Tibial artery (tissue), 4 donors: ENCODE measurements at regions of chr12 and their contacts with region 1.

Region 1: GRCh38 chr12:25958428-25959070 is at the start of gene RASSF8:
- DNase-seq: peak; percentile 61 to 85
- H3K4me3 ChIP-seq: peak within 1 kb of the TSS; percentile 92 to 96
- H3K27ac ChIP-seq: peak within 1 kb of the TSS; percentile 92 to 98
- H3K4me1 ChIP-seq: peaks cover 0 to 42% (median 20%) of the 10 kb centered on the region in 4 donors
- H3K27me3 ChIP-seq: no peaks in the 10 kb centered on the region
- CTCF ChIP-seq: no peak

Region 2: GRCh38 chr12:25997201-25997963 is 38.8 kb after region 1 on chr12:
- intact Hi-C with region 1: loop called (anchors 5 kb)
- DNase-seq: no peak
- H3K4me3 ChIP-seq: no peak overlapping the region
- H3K27ac ChIP-seq: no peak overlapping the region
- H3K4me1 ChIP-seq: peaks cover 0 to 60% (median 34%) of the 10 kb centered on the region in 4 donors
- H3K27me3 ChIP-seq: no peaks in the 10 kb centered on the region
- CTCF ChIP-seq: no peak

Region 3: DNA sequence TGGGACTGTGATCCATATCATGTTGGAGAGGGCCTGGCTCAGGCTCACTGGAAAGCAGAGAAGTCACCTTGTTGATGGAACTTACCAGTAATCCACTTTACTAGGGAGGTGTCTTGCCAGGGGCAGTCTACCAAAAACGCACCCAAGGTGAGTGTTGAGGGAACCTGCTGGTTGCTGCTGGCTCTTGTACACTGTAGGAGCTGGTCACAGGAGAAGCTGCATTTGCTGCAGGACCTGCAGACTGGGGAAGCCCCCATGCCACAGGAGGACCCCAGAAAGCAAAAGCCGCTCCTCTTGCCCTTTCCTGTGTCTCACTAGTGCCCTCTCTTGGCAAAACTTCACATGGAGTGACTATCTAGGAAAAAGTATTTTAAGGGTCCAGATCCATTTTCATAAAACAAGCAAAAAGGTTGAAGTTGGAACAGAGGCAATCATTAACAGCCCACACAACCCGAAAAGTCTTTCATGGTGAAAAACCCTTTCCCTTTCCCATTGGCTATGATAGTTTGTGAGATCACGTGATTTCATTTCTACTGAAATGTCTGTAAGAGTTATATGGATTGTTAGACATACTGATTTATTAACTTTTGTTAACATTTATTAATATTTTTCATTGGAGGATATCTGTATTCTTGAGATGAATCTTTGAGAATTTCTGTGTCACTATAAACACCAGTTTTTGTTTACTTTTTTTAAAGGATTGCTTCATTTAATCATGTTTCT is 59.1 kb after region 1 on chr12:
- intact Hi-C with region 1: loop called (anchors 5 kb)
- DNase-seq: no peak
- H3K4me3 ChIP-seq: no peak overlapping the region
- H3K27ac ChIP-seq: no peak overlapping the region
- H3K4me1 ChIP-seq: peaks cover 0 to 7% (median 3%) of the 10 kb centered on the region in 4 donors
- H3K27me3 ChIP-seq: no peaks in the 10 kb centered on the region
- CTCF ChIP-seq: peak; percentile 31 to 57

Region 4: DNA sequence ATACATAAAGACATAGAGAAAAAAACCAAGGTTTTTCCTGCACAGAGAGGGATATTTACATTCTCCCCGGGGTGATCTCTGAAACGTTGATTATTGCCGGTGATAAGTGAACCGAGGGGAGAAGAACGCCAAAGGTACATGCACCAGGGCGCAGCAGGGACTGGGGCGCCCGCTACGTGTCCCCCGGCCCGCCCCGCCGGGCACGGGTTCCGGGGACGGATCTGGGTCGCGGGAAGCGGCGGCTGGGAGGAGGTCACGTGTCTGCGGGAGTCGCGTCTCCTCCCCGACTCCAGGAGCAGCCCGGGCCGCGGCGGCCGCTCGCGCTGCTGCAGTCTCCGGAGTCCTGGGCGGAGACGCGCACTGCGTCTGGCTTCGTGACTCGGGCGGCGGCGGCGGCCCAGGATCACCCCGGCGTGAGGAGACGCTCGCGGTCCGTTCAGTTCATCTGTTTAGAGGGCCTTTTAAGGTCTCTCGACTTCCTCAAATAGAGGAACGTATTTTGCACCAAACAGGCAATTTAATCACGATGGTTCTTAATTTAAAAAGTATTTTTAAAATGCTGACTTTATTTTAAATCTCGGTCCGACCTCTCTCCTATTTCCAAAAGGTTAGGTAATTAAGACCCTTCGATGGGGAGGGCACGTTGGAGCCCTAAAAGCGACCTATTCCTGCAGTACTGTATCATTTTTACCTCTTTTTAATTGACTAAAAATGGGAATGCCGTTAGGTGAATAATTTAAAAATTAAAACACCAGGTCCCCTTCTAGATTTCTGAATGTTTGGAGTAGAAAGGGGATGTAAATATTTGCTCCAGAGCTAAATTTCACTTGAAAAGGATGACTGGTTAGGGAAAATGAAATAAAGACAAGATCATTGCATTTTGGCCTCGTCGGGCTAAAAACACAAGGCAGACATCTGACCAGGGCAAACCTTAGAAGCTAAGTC is 168.1 kb after region 1 on chr12:
- intact Hi-C with region 1: loop called (anchors 10 kb)
- DNase-seq: peak; percentile 86 to 95
- H3K4me3 ChIP-seq: peak overlapping the region; percentile 68 to 72
- H3K27ac ChIP-seq: peak overlapping the region; percentile 96 to 99
- H3K4me1 ChIP-seq: peaks cover 0 to 12% (median 8%) of the 10 kb centered on the region in 4 donors
- H3K27me3 ChIP-seq: no peaks in the 10 kb centered on the region
- CTCF ChIP-seq: no peak